ENCODE measurements at regions of chr6 and their contacts with region 1.

Region 1: DNA sequence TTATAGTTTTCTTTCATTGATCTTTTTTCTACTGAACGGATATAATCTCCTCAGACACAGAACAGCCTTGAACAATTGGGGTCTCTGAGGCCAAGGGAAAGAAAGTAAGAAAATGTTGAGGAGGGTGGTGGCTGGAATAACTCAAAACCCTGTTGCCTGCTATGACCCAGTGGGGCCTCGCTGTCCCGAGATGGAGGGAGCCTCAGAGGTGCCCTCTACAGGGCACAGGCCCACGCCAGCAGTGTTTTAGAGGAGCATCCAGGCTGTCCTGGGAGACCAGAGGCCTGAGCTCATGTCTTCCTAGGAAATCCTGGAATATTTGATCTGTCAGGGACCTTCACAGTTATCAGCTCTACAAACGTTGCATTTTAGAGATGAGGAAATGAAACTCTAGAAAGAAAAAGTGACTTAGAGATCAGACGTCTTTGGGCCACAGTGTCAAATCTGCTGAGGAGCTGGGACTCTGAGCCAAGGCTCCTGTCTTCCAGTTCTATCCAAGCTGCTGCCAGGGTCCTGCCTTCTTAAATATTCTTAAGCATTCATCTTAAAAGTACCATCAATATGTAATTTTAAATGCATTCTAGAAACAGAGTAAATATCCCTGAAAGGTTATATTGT is 26.3 kb downstream of the ALDH5A1 start:
- DNase-seq: peak; percentile 87
- H3K4me3 Mint-ChIP-seq: no peak overlapping the region
- H3K27ac Mint-ChIP-seq: no peak overlapping the region
- H3K4me1 Mint-ChIP-seq: peaks cover 16% of the 10 kb centered on the region
- H3K27me3 Mint-ChIP-seq: no peaks in the 10 kb centered on the region
- CTCF ChIP-seq: peak; percentile 94

Region 2: GRCh38 chr6:24431045-24431451 is 90.0 kb before region 1 on chr6:
- CTCF ChIA-PET with region 1: interaction called, 9 read pairs
- intact Hi-C with region 1: loop called (anchors 2 kb)
- DNase-seq: peak; percentile 58
- H3K4me3 Mint-ChIP-seq: no peak overlapping the region
- H3K27ac Mint-ChIP-seq: no peak overlapping the region
- H3K4me1 Mint-ChIP-seq: peaks cover 9% of the 10 kb centered on the region
- H3K27me3 Mint-ChIP-seq: no peaks in the 10 kb centered on the region
- CTCF ChIP-seq: peak; percentile 93

Region 3: GRCh38 chr6:24581084-24581669 is 60.1 kb after region 1 on chr6:
- CTCF ChIA-PET with region 1: interaction called, 7 read pairs
- intact Hi-C with region 1: loop called (anchors 2 kb)
- DNase-seq: peak; percentile 93
- H3K4me3 Mint-ChIP-seq: no peak overlapping the region
- H3K27ac Mint-ChIP-seq: no peak overlapping the region
- H3K4me1 Mint-ChIP-seq: peaks cover 40% of the 10 kb centered on the region
- H3K27me3 Mint-ChIP-seq: no peaks in the 10 kb centered on the region
- CTCF ChIP-seq: peak; percentile 94

Region 4: GRCh38 chr6:24766680-24767462 is 245.8 kb after region 1 on chr6:
- CTCF ChIA-PET with region 1: no interaction called
- intact Hi-C with region 1: loop called (anchors 1 kb)
- DNase-seq: no peak
- H3K4me3 Mint-ChIP-seq: no peak overlapping the region
- H3K27ac Mint-ChIP-seq: peak overlapping the region; percentile 17
- H3K4me1 Mint-ChIP-seq: peaks cover 25% of the 10 kb centered on the region
- H3K27me3 Mint-ChIP-seq: no peaks in the 10 kb centered on the region
- CTCF ChIP-seq: peak; percentile 67